Activated CD8-positive, alpha-beta memory T cell treated with anti-CD3 and anti-CD28 coated beads, Interleukin-2, amount 10 ng/mL, durations not matched to agents 7 days and 5 days (primary cell): ENCODE measurements at regions of chr6 and their contacts with region 1.

Region 1: GRCh38 chr6:3848925-3849605 is at the start of gene FAM50B:
- DNase-seq: peak; percentile 94
- ATAC-seq: peak; percentile 96
- H3K4me3 Mint-ChIP-seq: peak within 1 kb of the TSS; percentile 74
- H3K27ac Mint-ChIP-seq: peak within 1 kb of the TSS; percentile 74
- H3K4me1 Mint-ChIP-seq: peaks cover 32% of the 10 kb centered on the region
- H3K27me3 Mint-ChIP-seq: no peaks in the 10 kb centered on the region
- total RNA-seq, gene FAM50B: 8.8 to 10.6 TPM

Region 2: DNA sequence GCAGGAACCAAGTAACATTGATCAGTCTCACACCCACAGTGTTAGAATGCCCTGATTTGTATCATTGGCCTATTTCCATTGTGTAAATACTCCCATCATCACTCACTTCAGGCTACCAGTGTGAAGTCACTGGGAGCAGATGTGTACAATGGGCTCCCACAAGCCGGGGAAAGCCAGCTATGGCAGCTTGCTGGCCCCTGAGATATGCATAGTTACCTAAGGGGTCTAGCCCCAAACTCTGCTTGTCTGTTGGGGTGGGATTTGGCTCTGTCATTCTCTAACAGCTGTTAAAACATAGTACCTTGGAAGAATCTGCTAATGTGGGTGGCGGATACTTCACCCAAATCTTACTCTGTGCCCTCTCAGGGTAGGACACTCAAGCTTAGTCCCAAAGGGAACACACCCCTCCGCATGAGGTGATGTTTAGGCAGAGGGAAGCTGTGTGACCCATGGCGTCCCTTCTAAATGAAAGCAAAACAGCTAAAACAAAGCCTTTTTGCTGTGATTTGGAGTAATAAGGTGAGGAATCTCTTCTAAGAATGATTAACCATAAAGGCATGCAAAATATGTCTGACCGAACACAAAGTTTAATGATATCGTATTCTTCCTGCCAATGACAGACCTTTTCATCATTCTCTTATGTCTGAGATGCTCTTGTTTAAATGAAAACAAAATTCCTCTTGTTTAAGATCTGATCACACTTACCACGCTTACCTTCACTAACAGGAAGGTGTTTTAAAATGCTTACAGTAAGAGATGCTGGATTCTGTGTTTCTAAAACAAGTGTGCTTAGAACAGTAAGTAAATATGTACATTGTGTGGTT is 51.6 kb before region 1 on chr6:
- CTCF ChIA-PET with region 1: no interaction called
- DNase-seq: no peak
- ATAC-seq: no peak
- H3K4me3 Mint-ChIP-seq: no peak overlapping the region
- H3K27ac Mint-ChIP-seq: no peak overlapping the region
- H3K4me1 Mint-ChIP-seq: peaks cover 3% of the 10 kb centered on the region
- H3K27me3 Mint-ChIP-seq: peaks cover 5% of the 10 kb centered on the region

Region 3: GRCh38 chr6:3913077-3913957 is 64.3 kb after region 1 on chr6:
- CTCF ChIA-PET with region 1: interaction called, 10 read pairs
- DNase-seq: no peak
- ATAC-seq: no peak
- H3K4me3 Mint-ChIP-seq: no peak overlapping the region
- H3K27ac Mint-ChIP-seq: no peak overlapping the region
- H3K4me1 Mint-ChIP-seq: peaks cover 21% of the 10 kb centered on the region
- H3K27me3 Mint-ChIP-seq: peaks cover 40% of the 10 kb centered on the region

Region 4: GRCh38 chr6:3929281-3929798 is 80.3 kb after region 1 on chr6:
- CTCF ChIA-PET with region 1: interaction called, 12 read pairs
- DNase-seq: no peak
- ATAC-seq: no peak
- H3K4me3 Mint-ChIP-seq: no peak overlapping the region
- H3K27ac Mint-ChIP-seq: no peak overlapping the region
- H3K4me1 Mint-ChIP-seq: no peaks in the 10 kb centered on the region
- H3K27me3 Mint-ChIP-seq: peaks cover 3% of the 10 kb centered on the region

Region 5: DNA sequence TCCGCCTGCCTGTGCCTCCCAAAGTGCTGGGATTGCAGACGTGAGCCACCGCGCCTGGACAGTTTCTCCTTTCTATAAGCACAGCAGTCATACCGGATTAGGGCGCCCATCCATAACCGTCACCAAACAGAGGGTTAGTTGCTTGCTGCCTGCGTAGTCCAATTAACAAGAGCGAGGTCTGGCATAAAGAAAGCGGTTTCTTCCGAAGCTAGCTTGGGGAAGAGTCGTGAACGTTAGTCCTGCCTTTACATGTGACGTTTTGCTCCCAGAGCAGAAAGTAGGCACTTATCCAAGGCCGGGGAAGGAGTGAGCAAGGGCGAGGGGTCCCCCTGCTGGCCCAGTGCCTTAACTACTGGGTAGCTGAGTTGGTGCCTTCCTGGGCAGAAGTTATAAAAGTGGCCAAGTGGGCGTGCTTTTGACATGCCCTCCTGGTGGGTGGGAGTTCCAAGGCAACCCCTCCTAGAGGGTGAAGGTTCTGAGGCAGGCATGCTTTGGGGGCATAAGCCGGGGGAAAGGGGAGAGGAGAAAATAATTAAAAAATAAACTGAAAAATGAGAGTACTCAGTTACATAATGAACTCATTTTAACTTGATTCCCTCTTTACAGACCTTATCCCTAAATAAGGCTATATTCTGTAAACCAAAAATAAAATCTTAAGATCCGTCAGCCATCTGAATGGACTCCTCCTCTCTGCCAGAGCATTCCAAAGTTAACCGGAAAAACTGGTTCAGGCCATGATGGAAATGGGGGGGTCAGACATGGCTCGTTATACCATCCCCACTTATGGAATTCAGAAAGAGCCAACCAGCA is 141.8 kb after region 1 on chr6:
- CTCF ChIA-PET with region 1: interaction called, 21 read pairs
- DNase-seq: peak; percentile 74
- ATAC-seq: peak; percentile 83
- H3K4me3 Mint-ChIP-seq: no peak overlapping the region
- H3K27ac Mint-ChIP-seq: no peak overlapping the region
- H3K4me1 Mint-ChIP-seq: peaks cover 3% of the 10 kb centered on the region
- H3K27me3 Mint-ChIP-seq: no peaks in the 10 kb centered on the region

Region 6: GRCh38 chr6:4021133-4021853 is 172.2 kb after region 1 on chr6:
- CTCF ChIA-PET with region 1: interaction called, 18 read pairs
- DNase-seq: peak; percentile 94
- ATAC-seq: peak; percentile 71
- H3K4me3 Mint-ChIP-seq: peak overlapping the region; percentile 85
- H3K27ac Mint-ChIP-seq: peak overlapping the region; percentile 97
- H3K4me1 Mint-ChIP-seq: peaks cover 56% of the 10 kb centered on the region
- H3K27me3 Mint-ChIP-seq: no peaks in the 10 kb centered on the region